Activated T-helper 1 cell treated with anti-CD3 and anti-CD28 coated beads, Interleukin-12 subunit alpha, Interleukin-12 subunit beta, Interleukin-2, Interleukin-4 antibody, amounts not matched to agents 30 ng/mL and 10 ng/mL and 1 ng/mL, durations not matched to agents 14 hours and 24 hours and 36 hours (primary cell): ENCODE measurements at regions of chr22 and their contacts with region 1.

Region 1: GRCh38 chr22:41832553-41833368 is at the start of gene SREBF2:
- DNase-seq: peak; percentile 99
- H3K4me3 Mint-ChIP-seq: peak within 1 kb of the TSS; percentile 96
- H3K27ac Mint-ChIP-seq: peak within 1 kb of the TSS; percentile 98
- H3K4me1 Mint-ChIP-seq: peaks cover 51% of the 10 kb centered on the region
- H3K27me3 Mint-ChIP-seq: peaks cover 2% of the 10 kb centered on the region
- total RNA-seq, gene SREBF2: 235 and 245 TPM in 2 replicates

Region 2: GRCh38 chr22:41666661-41667258 is 166.0 kb before region 1 on chr22:
- intact Hi-C with region 1: loop called (anchors 1 kb)
- DNase-seq: peak; percentile 96
- H3K4me3 Mint-ChIP-seq: peak overlapping the region; percentile 81
- H3K27ac Mint-ChIP-seq: peak overlapping the region; percentile 95
- H3K4me1 Mint-ChIP-seq: peaks cover 17% of the 10 kb centered on the region
- H3K27me3 Mint-ChIP-seq: no peaks in the 10 kb centered on the region

Region 3: GRCh38 chr22:41780746-41781505 is 51.8 kb before region 1 on chr22:
- intact Hi-C with region 1: loop called (anchors 1 kb)
- DNase-seq: peak; percentile 90
- H3K4me3 Mint-ChIP-seq: peak overlapping the region; percentile 83
- H3K27ac Mint-ChIP-seq: peak overlapping the region; percentile 91
- H3K4me1 Mint-ChIP-seq: peaks cover 41% of the 10 kb centered on the region
- H3K27me3 Mint-ChIP-seq: peaks cover 2% of the 10 kb centered on the region

Region 4: DNA sequence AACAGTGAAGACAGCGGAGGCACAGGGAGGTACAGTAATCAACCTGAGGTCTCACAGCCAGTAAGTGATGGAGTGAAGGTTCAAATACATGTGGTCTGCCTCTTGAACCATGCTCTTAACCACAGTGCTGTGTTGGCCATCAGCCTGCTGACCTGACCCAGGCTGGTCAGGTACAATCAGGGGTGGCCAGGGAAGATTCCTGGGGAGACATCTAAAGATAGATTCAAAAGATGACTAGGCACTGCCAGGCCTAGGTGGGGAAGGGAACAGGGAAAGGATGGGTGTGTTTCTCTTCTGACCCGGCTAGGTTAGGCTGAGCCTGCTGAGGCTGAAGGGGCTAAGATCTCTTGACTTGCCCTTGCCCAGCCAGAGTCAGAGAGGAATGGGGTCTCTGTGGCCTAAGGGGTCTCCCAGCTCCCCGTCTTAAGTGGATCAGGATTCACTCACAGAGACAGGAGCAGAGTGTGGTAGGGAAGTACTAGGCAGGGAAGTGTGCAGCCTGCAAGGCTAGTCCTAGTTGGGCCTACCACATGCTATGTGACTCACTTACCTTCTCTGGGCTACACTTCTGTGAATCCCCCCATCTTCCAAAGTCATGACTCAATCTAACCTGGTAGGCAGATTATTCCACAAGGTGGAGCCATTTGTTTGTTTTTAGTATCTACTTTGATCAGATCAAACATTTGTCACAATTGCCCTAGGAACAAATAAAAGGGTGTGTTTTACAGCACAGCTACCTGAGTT is 10.3 kb before region 1 on chr22:
- intact Hi-C with region 1: loop called (anchors 1 kb)
- DNase-seq: peak; percentile 23
- H3K4me3 Mint-ChIP-seq: no peak overlapping the region
- H3K27ac Mint-ChIP-seq: peak overlapping the region; percentile 82
- H3K4me1 Mint-ChIP-seq: peaks cover 36% of the 10 kb centered on the region
- H3K27me3 Mint-ChIP-seq: no peaks in the 10 kb centered on the region

Region 5: GRCh38 chr22:41857155-41857859 is 24.5 kb after region 1 on chr22:
- intact Hi-C with region 1: loop called (anchors 1 kb)
- DNase-seq: peak; percentile 71
- H3K4me3 Mint-ChIP-seq: peak overlapping the region; percentile 60
- H3K27ac Mint-ChIP-seq: peak overlapping the region; percentile 99
- H3K4me1 Mint-ChIP-seq: peaks cover 72% of the 10 kb centered on the region
- H3K27me3 Mint-ChIP-seq: no peaks in the 10 kb centered on the region

Region 6: GRCh38 chr22:41998361-41999275 is 165.9 kb after region 1 on chr22 and contains the start of gene WBP2NL:
- intact Hi-C with region 1: loop called (anchors 1 kb)
- DNase-seq: peak; percentile 88
- H3K4me3 Mint-ChIP-seq: peak within 1 kb of the TSS; percentile 91
- H3K27ac Mint-ChIP-seq: peak within 1 kb of the TSS; percentile 95
- H3K4me1 Mint-ChIP-seq: peaks cover 40% of the 10 kb centered on the region
- H3K27me3 Mint-ChIP-seq: peaks cover 1% of the 10 kb centered on the region
- total RNA-seq, gene WBP2NL: 1.5 and 2.3 TPM in 2 replicates

Region 7: GRCh38 chr22:42079319-42080251 is 246.8 kb after region 1 on chr22 and contains the start of gene SMDT1:
- intact Hi-C with region 1: loop called (anchors 2 kb)
- DNase-seq: peak; percentile 98
- H3K4me3 Mint-ChIP-seq: peak within 1 kb of the TSS; percentile 89
- H3K27ac Mint-ChIP-seq: peak within 1 kb of the TSS; percentile 92
- H3K4me1 Mint-ChIP-seq: peaks cover 34% of the 10 kb centered on the region
- H3K27me3 Mint-ChIP-seq: no peaks in the 10 kb centered on the region
- total RNA-seq, gene SMDT1: 53.9 and 58.2 TPM in 2 replicates